ENCODE measurements at regions of chr15 and their contacts with region 1.

Region 1: GRCh38 chr15:89017370-89018066 is 70.7 kb upstream of the ABHD2 start:
- DNase-seq: peak; percentile 89
- H3K4me3 ChIP-seq: peak overlapping the region in 3 of 8 donors; percentile 3 to 56 (median 3)
- H3K27ac ChIP-seq: peak overlapping the region in 7 of 8 donors; percentile 11 to 71 (median 41)
- H3K4me1 ChIP-seq: peaks cover 10 to 27% (median 17%) of the 10 kb centered on the region in 6 donors
- H3K27me3 ChIP-seq: peaks cover 0 to 26% (median 0%) of the 10 kb centered on the region in 7 donors
- CTCF ChIP-seq: peak; percentile 45 to 81 (median 72)
- POLR2A ChIP-seq: no peak

Region 2: DNA sequence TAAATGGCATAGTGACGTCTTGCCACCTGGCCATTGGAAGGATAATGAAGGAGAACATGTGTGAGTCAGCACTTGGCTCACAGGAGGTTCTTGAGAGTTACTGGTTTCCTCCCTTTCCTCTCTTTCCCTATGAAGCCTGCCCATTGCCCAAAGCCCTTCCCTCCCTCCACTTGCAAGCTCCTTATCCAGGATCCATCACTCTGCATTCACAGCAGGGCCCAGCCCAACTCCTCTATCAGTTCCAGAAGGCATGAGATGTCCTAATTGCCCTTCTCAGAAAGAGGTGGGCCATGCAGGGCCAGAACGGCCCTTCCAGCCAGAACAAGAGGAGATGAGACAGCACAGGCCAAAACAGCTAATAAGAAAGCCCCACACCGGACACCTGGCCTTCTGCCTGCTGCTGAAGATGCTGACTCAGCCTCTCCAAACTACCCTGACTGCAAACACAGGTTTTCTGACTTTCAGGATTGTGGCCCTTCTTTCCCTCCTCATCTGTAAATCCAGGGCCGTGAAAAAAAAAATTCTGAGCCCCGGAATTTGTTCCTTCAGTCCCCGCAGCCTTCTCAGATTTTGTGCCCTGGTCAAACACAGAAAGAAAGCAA is 151.9 kb before region 1 on chr15:
- intact Hi-C with region 1: no loop called
- DNase-seq: no peak
- H3K4me3 ChIP-seq: no peak overlapping the region
- H3K27ac ChIP-seq: no peak overlapping the region
- H3K4me1 ChIP-seq: no peaks in the 10 kb centered on the region
- H3K27me3 ChIP-seq: no peaks in the 10 kb centered on the region
- CTCF ChIP-seq: no peak
- POLR2A ChIP-seq: no peak

Region 3: GRCh38 chr15:88904624-88905327 is 112.7 kb before region 1 on chr15:
- intact Hi-C with region 1: loop called (anchors 10 kb)
- DNase-seq: peak; percentile 93
- H3K4me3 ChIP-seq: no peak overlapping the region
- H3K27ac ChIP-seq: peak overlapping the region in 4 of 8 donors; percentile 43 to 72 (median 56)
- H3K4me1 ChIP-seq: peaks cover 0 to 15% (median 9%) of the 10 kb centered on the region in 6 donors
- H3K27me3 ChIP-seq: no peaks in the 10 kb centered on the region
- CTCF ChIP-seq: peak; percentile 94 to 98 (median 98)
- POLR2A ChIP-seq: no peak

Region 4: GRCh38 chr15:89070197-89071124 is 52.9 kb after region 1 on chr15:
- intact Hi-C with region 1: no loop called
- DNase-seq: no peak
- H3K4me3 ChIP-seq: peak overlapping the region in 1 of 8 donors; percentile 18
- H3K27ac ChIP-seq: peak overlapping the region in 5 of 8 donors; percentile 48 to 89 (median 78)
- H3K4me1 ChIP-seq: peaks cover 0 to 54% (median 20%) of the 10 kb centered on the region in 6 donors
- H3K27me3 ChIP-seq: no peaks in the 10 kb centered on the region
- CTCF ChIP-seq: no peak
- POLR2A ChIP-seq: no peak

Measured in spleen (tissue), 13 donors.